Sigmoid colon (tissue), 7 donors: ENCODE measurements at regions of chr22 and their contacts with region 1.

Region 1: GRCh38 chr22:36144886-36145541 is 15.5 kb downstream of the APOL3 start:
- DNase-seq: peak; percentile 89
- H3K4me3 ChIP-seq: no peak overlapping the region
- H3K27ac ChIP-seq: peak overlapping the region; percentile 16 to 50 (median 20)
- H3K4me1 ChIP-seq: peaks cover 0 to 25% (median 12%) of the 10 kb centered on the region in 4 donors
- H3K27me3 ChIP-seq: no peaks in the 10 kb centered on the region
- CTCF ChIP-seq: peak; percentile 80 to 89 (median 82)
- EP300 ChIP-seq: no peak
- POLR2A ChIP-seq: no peak

Region 2: GRCh38 chr22:36123673-36124630 is 21.1 kb before region 1 on chr22:
- intact Hi-C with region 1: no loop called
- DNase-seq: peak; percentile 98
- H3K4me3 ChIP-seq: peak overlapping the region in 3 of 4 donors; percentile 22 to 39 (median 30)
- H3K27ac ChIP-seq: peak overlapping the region; percentile 80 to 87 (median 84)
- H3K4me1 ChIP-seq: peaks cover 0 to 12% (median 7%) of the 10 kb centered on the region in 4 donors
- H3K27me3 ChIP-seq: no peaks in the 10 kb centered on the region
- CTCF ChIP-seq: peak; percentile 96 to 100 (median 98)
- EP300 ChIP-seq: peak in 2 of 4 donors; percentile 37 to 41
- POLR2A ChIP-seq: no peak

Region 3: GRCh38 chr22:36180038-36180880 is 35.2 kb after region 1 on chr22:
- intact Hi-C with region 1: loop called (anchors 1 kb)
- DNase-seq: peak; percentile 93
- H3K4me3 ChIP-seq: no peak overlapping the region
- H3K27ac ChIP-seq: no peak overlapping the region
- H3K4me1 ChIP-seq: peaks cover 0 to 8% (median 0%) of the 10 kb centered on the region in 4 donors
- H3K27me3 ChIP-seq: no peaks in the 10 kb centered on the region
- CTCF ChIP-seq: peak; percentile 69 to 91 (median 83)
- EP300 ChIP-seq: no peak
- POLR2A ChIP-seq: no peak

Region 4: DNA sequence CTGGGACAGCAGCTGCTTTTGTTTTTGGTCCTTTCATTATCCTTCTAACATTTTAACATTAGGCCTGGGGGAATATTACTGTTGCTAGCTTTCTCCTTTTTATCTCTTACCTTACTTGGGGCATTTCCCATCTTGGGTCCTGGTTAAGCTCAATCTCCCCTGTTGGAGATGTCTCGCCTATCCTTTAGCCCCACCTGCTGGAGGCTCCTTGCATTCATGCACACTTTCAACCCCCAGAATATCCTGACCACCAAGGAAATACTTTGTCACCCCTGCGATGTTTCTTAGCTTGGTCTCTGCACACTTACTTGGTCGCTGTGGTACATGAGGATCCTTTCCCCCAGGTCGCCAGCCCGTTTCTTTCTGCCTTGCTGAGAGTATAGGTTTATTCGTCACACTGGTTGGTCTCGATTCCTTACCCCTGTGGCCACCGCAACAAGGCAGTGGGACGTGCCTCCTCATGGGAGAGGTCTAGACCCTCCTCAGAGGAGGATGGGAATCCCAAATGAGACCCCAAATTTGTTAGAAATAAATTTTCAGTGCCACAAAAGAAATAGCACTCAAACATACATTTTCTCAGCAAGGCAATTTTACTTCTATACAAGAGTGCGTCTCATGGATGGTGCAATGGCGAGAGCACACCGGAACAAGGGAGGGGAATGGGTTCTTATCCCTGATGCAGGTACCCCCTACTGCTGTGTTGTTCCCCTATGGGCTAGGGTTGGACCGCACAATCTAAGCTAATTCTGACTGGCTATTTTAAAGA is 341.8 kb after region 1 on chr22:
- intact Hi-C with region 1: loop called (anchors 5 kb)
- DNase-seq: no peak
- H3K4me3 ChIP-seq: no peak overlapping the region
- H3K27ac ChIP-seq: peak overlapping the region in 2 of 4 donors; percentile 6 to 30
- H3K4me1 ChIP-seq: peaks cover 0 to 9% (median 7%) of the 10 kb centered on the region in 4 donors
- H3K27me3 ChIP-seq: no peaks in the 10 kb centered on the region
- CTCF ChIP-seq: peak; percentile 76 to 84 (median 77)
- EP300 ChIP-seq: no peak
- POLR2A ChIP-seq: no peak